PC-9 (cell line): ENCODE measurements at regions of chr22 and their contacts with region 1.

Region 1: DNA sequence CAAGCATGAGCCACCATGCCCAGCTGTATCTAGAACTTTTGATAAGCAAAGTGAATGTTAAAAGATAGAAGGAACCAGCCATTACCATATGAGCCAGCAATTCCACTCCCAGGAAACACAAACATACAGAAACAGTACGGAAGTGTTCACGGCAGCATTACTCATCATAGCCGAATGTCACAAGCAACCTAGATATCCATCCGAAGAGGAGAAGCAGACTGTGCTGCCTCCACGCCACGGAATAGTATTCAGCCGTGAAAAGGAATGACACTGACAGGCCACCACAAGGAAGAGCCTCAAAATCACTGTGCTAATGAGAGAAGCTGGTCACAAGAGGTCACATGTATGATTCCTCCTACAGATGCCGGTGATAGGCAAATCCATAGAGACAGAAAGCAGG is 17.6 kb upstream of the MGAT3 start:
- DNase-seq: peak in 1 of 2 experiments; percentile 60
- H3K4me3 ChIP-seq: no peak overlapping the region
- H3K27ac ChIP-seq: no peak overlapping the region
- H3K4me1 ChIP-seq: peaks cover 7% of the 10 kb centered on the region
- H3K27me3 ChIP-seq: no peaks in the 10 kb centered on the region
- CTCF ChIP-seq: no peak

Region 2: GRCh38 chr22:38412435-38413084 is 1026.6 kb before region 1 on chr22:
- CTCF ChIA-PET with region 1: no interaction called
- POLR2A ChIA-PET with region 1: interaction called, 10 read pairs
- intact Hi-C with region 1: no loop called
- DNase-seq: peak; percentile 32 to 43
- H3K4me3 ChIP-seq: peak overlapping the region; percentile 29; the same call in 1 of the 2 replicates
- H3K27ac ChIP-seq: no peak overlapping the region
- H3K4me1 ChIP-seq: no peaks in the 10 kb centered on the region
- H3K27me3 ChIP-seq: no peaks in the 10 kb centered on the region
- CTCF ChIP-seq: peak; percentile 89

Region 3: DNA sequence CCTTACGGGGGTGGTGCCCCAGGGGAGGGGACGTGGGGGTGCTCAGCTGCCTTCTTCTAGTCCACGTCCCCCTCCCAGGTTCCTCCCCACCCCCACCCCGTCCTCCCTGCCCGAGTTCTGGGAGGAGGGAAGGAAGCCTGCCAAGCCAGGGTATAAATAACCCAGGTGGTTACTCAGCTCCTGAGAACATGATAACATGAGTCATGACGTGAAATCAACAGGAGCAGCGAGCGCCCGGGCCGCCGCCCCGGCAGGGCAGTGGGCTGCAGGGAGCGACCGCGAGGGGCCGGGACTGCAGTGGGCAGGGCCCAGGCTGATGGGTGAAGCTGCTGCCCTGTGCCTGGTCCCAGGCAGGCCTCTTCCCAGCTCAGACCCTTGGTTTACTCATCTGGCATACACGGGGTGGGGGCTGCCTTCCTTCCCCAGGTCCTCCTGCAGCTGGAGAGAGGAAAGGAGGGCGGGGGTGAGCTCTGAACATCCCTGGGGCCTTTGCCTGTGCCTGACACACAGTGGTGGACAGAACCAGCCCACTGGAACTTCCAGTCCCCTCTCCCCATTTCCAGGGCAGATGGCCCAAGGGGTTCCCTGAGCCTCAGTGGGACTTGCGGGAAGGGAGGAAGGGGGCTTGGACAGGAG is 185.6 kb before region 1 on chr22:
- CTCF ChIA-PET with region 1: no interaction called
- POLR2A ChIA-PET with region 1: no interaction called
- intact Hi-C with region 1: no loop called
- DNase-seq: peak; percentile 84 to 86
- H3K4me3 ChIP-seq: peak overlapping the region; percentile 33; the same call in 1 of the 2 replicates
- H3K27ac ChIP-seq: peak overlapping the region; percentile 51
- H3K4me1 ChIP-seq: peaks cover 46% of the 10 kb centered on the region
- H3K27me3 ChIP-seq: no peaks in the 10 kb centered on the region
- CTCF ChIP-seq: no peak

Region 4: GRCh38 chr22:39405346-39406085 is 33.7 kb before region 1 on chr22:
- CTCF ChIA-PET with region 1: interaction called, 4 read pairs
- POLR2A ChIA-PET with region 1: interaction called, 13 read pairs
- intact Hi-C with region 1: no loop called
- DNase-seq: no peak
- H3K4me3 ChIP-seq: no peak overlapping the region
- H3K27ac ChIP-seq: no peak overlapping the region
- H3K4me1 ChIP-seq: peaks cover 2% of the 10 kb centered on the region
- H3K27me3 ChIP-seq: no peaks in the 10 kb centered on the region
- CTCF ChIP-seq: no peak

Region 5: DNA sequence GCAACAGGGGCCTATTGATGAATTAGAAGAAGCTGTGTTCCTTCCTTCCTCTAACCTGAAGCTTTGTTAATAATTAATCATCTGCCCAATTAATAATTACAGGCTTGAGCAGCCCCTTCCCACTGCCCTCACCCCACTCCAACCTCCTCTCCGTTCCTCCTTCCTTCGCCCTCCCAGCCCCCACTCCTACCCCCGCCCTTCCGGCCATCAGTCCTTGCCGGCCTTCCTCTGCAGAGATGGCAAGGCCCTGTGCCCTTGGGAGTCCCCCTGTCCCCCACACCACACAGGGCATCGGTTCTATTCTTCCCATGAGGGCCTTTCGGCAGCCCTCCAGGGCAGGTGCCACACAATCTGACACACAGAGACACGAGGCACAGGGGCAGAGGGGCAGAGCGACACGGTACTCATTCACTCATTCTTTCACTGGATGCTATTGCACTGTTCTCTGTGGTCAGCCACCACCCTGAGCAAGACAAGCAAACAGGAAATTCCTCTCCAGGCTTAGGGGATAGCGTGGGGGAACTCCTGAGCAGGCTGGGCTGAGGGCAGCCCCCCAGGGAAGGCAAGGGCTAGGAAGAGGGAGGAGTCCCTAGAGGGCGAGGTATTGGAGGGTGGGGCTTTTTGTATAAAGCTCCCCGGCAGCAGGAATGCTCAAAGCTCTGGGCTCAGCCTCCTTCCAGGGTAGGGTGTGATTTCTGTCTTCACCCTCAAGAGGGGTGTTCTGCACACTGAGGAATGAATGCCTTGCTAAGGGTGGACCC is 32.4 kb after region 1 on chr22:
- CTCF ChIA-PET with region 1: no interaction called
- POLR2A ChIA-PET with region 1: no interaction called
- intact Hi-C with region 1: loop called (anchors 5 kb)
- DNase-seq: peak; percentile 58 to 68
- H3K4me3 ChIP-seq: no peak overlapping the region
- H3K27ac ChIP-seq: no peak overlapping the region
- H3K4me1 ChIP-seq: peaks cover 25% of the 10 kb centered on the region
- H3K27me3 ChIP-seq: peaks cover 18% of the 10 kb centered on the region
- CTCF ChIP-seq: no peak

Region 6: DNA sequence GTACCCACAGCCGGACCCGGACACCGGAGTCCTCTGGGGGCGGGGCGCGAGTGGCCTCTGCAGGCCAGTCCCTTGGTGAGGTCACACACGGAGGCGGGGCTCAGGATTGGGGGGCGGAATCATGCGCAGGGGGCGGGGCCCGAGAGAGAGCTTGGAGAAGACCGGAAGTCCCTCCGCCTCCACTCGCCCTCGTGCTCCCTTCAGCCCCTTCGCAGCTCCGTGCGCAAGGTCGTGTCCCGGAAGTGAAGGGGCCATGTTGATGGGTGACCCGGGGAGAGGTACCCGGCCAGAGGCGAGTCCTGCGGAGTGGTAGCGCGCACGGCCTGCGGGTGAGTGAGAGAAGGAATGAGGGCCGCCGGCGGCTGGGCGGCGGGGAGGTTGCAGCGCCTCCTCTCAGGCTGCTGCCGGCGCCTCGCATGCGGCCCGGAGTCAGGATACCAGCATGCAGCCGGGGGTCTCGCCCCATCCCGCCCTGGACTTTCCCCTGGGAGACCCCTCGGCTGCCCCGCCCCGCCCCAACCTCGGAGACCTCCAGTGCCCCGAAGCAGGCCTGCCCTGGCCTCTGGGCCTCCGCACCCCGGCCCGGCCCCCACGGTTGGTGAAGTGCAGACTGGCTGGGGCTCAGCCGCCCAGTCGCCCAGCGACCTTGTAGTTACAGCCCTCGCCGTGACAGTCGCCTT is 63.1 kb after region 1 on chr22 and contains the start of gene MIEF1:
- CTCF ChIA-PET with region 1: interaction called, 3 read pairs
- POLR2A ChIA-PET with region 1: interaction called, 4 read pairs
- intact Hi-C with region 1: loop called (anchors 5 kb)
- DNase-seq: peak; percentile 94 to 97
- H3K4me3 ChIP-seq: peak within 1 kb of the TSS; percentile 92
- H3K27ac ChIP-seq: peak within 1 kb of the TSS; percentile 20; the same call in 1 of the 2 replicates
- H3K4me1 ChIP-seq: peaks cover 28% of the 10 kb centered on the region
- H3K27me3 ChIP-seq: no peaks in the 10 kb centered on the region
- CTCF ChIP-seq: no peak
- total RNA-seq, gene MIEF1: 36.9 TPM in 2 replicates

Region 7: GRCh38 chr22:39634671-39635405 is 195.7 kb after region 1 on chr22:
- CTCF ChIA-PET with region 1: no interaction called
- POLR2A ChIA-PET with region 1: no interaction called
- intact Hi-C with region 1: no loop called
- DNase-seq: peak; percentile 95 to 99
- H3K4me3 ChIP-seq: peak overlapping the region; percentile 39; the same call in 1 of the 2 replicates
- H3K27ac ChIP-seq: peak overlapping the region; percentile 55
- H3K4me1 ChIP-seq: peaks cover 54% of the 10 kb centered on the region
- H3K27me3 ChIP-seq: no peaks in the 10 kb centered on the region
- CTCF ChIP-seq: no peak